CD14-positive monocyte (primary cell): ENCODE measurements at regions of chr3 and their contacts with region 1.

Region 1: DNA sequence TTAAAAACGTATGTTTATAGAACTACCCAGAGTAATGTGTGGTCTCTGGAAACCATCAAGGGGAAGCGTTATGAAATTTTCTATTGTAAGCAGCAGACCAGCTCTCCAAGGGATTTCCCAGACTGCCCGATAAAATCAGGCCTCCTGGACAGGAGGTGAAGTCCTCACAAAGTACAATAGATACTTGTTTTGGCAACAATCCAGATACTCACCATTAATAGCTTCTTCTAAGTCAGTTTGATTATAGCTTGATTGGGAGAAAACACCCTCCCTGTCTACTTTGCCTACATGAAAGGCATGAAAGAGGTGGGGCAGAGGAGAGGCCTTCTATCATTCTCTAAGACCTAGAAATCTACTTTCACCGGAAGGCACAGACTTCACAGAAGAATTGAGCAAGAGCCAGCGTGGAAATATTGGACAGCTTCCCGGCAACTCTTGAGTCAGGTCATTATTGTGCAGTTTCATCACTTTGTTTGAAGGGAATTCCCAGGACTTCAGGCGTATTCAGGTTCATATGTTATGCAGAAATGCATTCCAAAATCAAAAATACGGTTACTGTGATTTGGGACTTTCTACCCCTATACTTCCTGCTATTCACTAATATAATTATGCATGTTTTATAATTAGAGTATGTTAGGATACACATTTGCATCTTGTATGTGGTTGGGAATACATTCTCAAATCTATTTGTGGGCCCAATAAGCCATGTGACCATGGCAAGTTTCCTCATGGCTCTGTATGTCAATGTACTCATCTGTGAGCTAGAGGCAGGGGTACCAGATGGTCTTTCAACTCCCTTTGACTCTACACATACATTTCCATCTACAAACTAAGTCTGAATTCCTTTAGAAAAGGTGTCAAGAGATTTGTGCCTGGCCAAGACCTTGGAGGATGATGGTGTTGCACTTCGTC is 103.5 kb downstream of the CD47 start:
- DNase-seq: peak; percentile 76 to 96 (median 90)
- H3K4me3 ChIP-seq: peak overlapping the region in 1 of 3 experiments; percentile 56
- H3K4me3 Mint-ChIP-seq: peak overlapping the region in 1 of 2 donors; percentile 48
- H3K27ac ChIP-seq: peak overlapping the region; percentile 82 to 94
- H3K27ac Mint-ChIP-seq: peak overlapping the region; percentile 88 to 98 (median 95)
- H3K4me1 ChIP-seq: peaks cover 54 to 62% of the 10 kb centered on the region in 2 donors
- H3K4me1 Mint-ChIP-seq: peaks cover 54% of the 10 kb centered on the region
- H3K27me3 ChIP-seq: no peaks in the 10 kb centered on the region
- H3K27me3 Mint-ChIP-seq: peaks cover 0 to 1% (median under 1%) of the 10 kb centered on the region in 3 donors
- CTCF ChIP-seq: no peak

Region 2: GRCh38 chr3:108130701-108131474 is 143.6 kb after region 1 on chr3:
- intact Hi-C with region 1: loop called in 1 of 2 experiments (anchors 5 kb)
- DNase-seq: peak; percentile 61 to 90 (median 86)
- H3K4me3 ChIP-seq: no peak overlapping the region
- H3K4me3 Mint-ChIP-seq: peak overlapping the region in 1 of 2 donors; percentile 68
- H3K27ac ChIP-seq: peak overlapping the region; percentile 73 to 85
- H3K27ac Mint-ChIP-seq: peak overlapping the region; percentile 66 to 99 (median 94)
- H3K4me1 ChIP-seq: peaks cover 46 to 59% of the 10 kb centered on the region in 2 donors
- H3K4me1 Mint-ChIP-seq: peaks cover 66% of the 10 kb centered on the region
- H3K27me3 ChIP-seq: no peaks in the 10 kb centered on the region
- H3K27me3 Mint-ChIP-seq: peaks cover 0 to 6% (median 1%) of the 10 kb centered on the region in 3 donors
- CTCF ChIP-seq: no peak